Right ventricle myocardium inferior (tissue), 1 donor: ENCODE measurements at regions of chr5 and their contacts with region 1.

Region 1: GRCh38 chr5:170267431-170268152 is 30.0 kb downstream of the LCP2 start:
- DNase-seq: peak; percentile 86
- ATAC-seq: peak; percentile 63

Region 2: DNA sequence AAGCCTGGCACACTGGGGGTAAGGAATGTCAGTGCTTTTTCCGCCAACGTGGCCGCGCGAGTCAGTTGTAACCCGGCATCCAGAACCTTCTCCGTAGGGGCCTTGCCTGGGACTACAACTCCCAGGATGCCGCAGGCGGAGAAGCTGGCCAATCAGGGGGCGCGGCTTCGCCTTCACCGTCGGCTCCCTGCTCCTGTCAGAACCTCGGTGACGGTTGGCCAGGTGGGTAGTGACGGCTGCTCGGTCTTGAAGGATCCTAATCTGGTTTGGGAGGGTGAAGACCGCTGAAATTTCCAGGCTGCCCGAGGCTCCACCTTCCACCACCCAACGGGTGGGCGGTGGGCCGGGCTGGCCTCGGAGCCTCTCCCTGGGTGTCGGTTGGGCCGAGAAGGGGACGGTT is 34.8 kb before region 1 on chr5 and contains the start of gene C5orf58:
- intact Hi-C with region 1: no loop called
- DNase-seq: no peak
- ATAC-seq: no peak
- total RNA-seq, gene C5orf58: not detected

Region 3: GRCh38 chr5:170338933-170339779 is 71.6 kb after region 1 on chr5:
- intact Hi-C with region 1: loop called (anchors 5 kb)
- DNase-seq: no peak
- ATAC-seq: peak; percentile 47

Region 4: GRCh38 chr5:170404402-170404801 is 136.8 kb after region 1 on chr5:
- intact Hi-C with region 1: loop called (anchors 5 kb)
- DNase-seq: no peak
- ATAC-seq: no peak

Region 5: DNA sequence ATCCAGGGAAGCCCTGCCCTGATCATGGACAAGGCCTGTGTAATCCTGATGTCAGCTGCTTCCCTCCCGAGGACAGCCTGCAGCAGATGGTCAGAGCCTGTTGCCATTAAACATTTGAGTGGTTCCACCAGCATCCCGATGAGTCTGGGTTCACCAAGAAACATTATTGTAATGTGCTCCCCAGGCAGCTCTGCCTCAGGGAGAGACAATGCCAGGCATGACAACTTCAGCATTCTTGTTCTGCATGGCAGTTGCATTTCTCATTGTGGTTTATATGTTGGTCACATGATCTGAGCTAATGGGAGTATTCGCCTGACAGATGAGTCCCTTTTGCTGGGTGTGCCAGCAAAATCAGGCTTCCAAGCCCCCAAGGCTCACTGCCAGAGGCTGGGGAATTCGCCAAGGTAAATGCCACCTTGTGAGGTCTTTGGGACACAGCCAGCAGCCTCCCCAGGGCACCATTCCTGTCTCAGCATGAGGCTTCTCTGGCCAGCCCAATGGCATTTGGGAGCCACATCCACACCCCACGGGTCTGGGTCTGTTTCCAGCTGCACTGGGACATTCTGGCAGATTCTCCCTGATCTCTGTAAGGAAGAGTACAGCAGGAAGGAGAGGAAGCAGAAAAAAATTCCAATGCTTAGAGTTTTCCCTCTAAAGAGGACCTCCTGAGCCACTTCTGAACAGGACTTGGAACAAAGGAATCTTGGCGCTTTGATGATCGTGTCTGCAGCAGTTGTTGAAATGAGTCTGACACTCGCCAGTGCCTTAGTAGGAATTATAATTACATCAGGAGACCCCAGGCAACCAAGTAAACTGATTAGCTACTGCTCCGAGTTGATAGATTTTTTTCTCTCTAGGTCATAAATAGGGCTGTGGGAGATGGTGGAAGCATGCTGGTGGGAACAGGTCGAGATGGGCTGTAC is 254.9 kb after region 1 on chr5:
- intact Hi-C with region 1: no loop called
- DNase-seq: no peak
- ATAC-seq: peak; percentile 8